GM12878 (cell line): ENCODE measurements at regions of chr6 and their contacts with region 1.

Region 1: DNA sequence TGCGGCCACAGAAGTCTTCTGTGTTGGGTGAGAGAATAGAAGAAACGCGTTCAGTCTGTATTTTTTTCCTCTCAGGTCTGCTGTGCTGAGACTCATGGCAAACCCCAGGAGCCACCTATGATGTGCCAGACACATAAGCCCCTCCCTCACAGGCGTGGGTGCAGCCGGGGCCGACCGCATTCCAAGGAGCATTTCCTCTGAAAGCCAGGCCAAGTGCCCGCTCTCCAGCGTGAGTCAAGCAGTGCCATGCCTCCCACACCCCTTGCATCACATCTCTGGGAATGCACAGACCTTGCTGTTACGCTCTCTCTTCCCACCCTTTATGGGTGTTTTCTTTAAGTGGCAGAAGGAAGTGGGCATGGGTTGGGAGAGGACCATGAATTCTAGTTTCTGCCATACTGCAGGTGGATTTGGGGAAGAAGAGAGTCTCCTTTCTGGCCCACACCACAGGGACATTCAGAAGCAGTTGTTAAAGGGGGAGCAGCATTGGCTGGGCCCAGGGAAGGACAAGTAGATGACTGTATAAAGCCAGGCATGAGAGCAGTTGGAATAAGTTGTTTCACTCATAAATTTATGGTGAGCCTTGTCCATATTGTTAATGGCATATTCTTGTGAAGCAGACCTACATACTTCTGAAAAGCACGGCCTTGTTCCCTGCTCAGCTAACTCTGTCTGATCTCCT is 37.1 kb upstream of the TFAP2A start:
- DNase-seq: no peak
- ATAC-seq: no peak; the same call in 2 of the 3 replicates
- H3K4me3 ChIP-seq: no peak overlapping the region
- H3K27ac ChIP-seq: no peak overlapping the region
- H3K4me1 ChIP-seq: no peaks in the 10 kb centered on the region
- H3K27me3 ChIP-seq: peaks cover 0 to 3% of the 10 kb centered on the region in 2 experiments; a peak in 1 of 4 replicates
- CTCF ChIP-seq: no peak
- EP300 ChIP-seq: no peak
- POLR2A ChIP-seq: no peak
- RAD21 ChIP-seq: no peak

Region 2: GRCh38 chr6:10465629-10466504 is 13.9 kb after region 1 on chr6:
- CTCF ChIA-PET with region 1: interaction called, 28 read pairs
- POLR2A ChIA-PET with region 1: no interaction called
- RAD21 ChIA-PET with region 1: interaction called, 9 read pairs
- SMC1A ChIA-PET with region 1: interaction called, 7 read pairs
- in situ Hi-C with region 1: no loop called
- intact Hi-C with region 1: no loop called
- DNase-seq: no peak
- ATAC-seq: peak; percentile 69
- H3K4me3 ChIP-seq: no peak overlapping the region
- H3K27ac ChIP-seq: no peak overlapping the region
- H3K4me1 ChIP-seq: peaks cover under 1% of the 10 kb centered on the region; the same call in 1 of the 2 replicates
- H3K27me3 ChIP-seq: no peaks in the 10 kb centered on the region; a peak in 1 of 4 replicates
- CTCF ChIP-seq: peak; percentile 48 to 73 (median 59)
- EP300 ChIP-seq: no peak
- POLR2A ChIP-seq: no peak
- RAD21 ChIP-seq: peak; percentile 44